ENCODE measurements at regions of chr15 and their contacts with region 1.

Region 1: GRCh38 chr15:69623392-69624152 is 171.0 kb downstream of the RPLP1 start:
- DNase-seq: no peak

Region 2: GRCh38 chr15:69647142-69647513 is 23.6 kb after region 1 on chr15:
- intact Hi-C with region 1: loop called in 1 of 2 experiments (anchors 1 kb)
- DNase-seq: no peak

Region 3: DNA sequence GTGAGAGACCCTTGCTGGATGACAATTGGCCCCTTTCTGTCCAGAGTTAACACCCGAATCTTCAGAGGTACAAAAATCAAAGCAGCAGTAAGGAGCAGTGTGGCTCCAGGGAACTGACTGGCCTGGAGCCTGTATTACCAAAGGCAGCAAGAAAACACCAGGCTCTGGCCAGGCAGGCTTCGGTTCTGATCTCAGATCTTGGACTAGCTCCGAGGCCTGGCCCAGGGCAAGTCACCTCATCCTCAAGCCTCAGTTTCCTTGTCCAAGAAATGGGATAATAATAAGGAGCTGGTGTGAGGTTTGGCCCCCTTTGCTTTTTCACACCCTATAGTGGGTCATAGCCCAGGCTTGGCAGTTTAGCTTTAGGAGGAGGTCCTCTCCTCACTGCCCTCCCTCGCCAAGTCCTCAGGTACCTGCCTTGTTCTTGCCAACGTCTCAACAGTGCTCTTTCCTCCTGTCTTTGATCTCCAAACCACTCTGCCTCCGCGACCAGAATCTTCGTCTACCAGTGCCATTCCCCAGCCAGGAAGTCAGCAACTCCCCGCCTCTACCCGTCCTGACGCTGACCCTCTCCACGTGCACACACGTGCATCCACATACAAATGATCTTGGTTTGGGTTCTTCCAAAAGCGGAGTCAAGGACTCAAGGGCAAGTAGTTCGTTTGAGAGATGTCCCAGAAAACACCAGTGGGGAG is 556.8 kb after region 1 on chr15:
- intact Hi-C with region 1: no loop called
- DNase-seq: peak; percentile 61

Measured in posterior vena cava (tissue), 2 donors.